ENCODE measurements at regions of chr1 and their contacts with region 1.

Region 1: GRCh38 chr1:246931549-246932365 is at the start of gene AHCTF1:
- DNase-seq: peak; percentile 97
- H3K4me3 ChIP-seq: peak within 1 kb of the TSS; percentile 72 to 95 (median 89)
- H3K27ac ChIP-seq: peak within 1 kb of the TSS; percentile 80
- H3K4me1 ChIP-seq: peaks cover 2% of the 10 kb centered on the region
- H3K27me3 ChIP-seq: no peaks in the 10 kb centered on the region
- CTCF ChIP-seq: peak in 1 of 2 donors; percentile 1
- total RNA-seq, gene AHCTF1: 31.7 to 41.0 TPM

Region 2: GRCh38 chr1:247007511-247008405 is 76.0 kb after region 1 on chr1 and contains the start of gene ZNF695:
- CTCF ChIA-PET with region 1: no interaction called
- dilution Hi-C with region 1: no loop called
- in situ Hi-C with region 1: no loop called
- intact Hi-C with region 1: loop called (anchors 5 kb)
- DNase-seq: peak; percentile 96
- H3K4me3 ChIP-seq: peak within 1 kb of the TSS; percentile 49 to 69 (median 62)
- H3K27ac ChIP-seq: no peak within 1 kb of the TSS
- H3K4me1 ChIP-seq: no peaks in the 10 kb centered on the region
- H3K27me3 ChIP-seq: no peaks in the 10 kb centered on the region
- CTCF ChIP-seq: no peak
- total RNA-seq, gene ZNF695: 1.7 to 4.4 TPM

Region 3: GRCh38 chr1:247078261-247079140 is 146.7 kb after region 1 on chr1 and contains the start of gene ZNF670:
- CTCF ChIA-PET with region 1: no interaction called
- dilution Hi-C with region 1: loop called (anchors 5 kb)
- in situ Hi-C with region 1: no loop called
- intact Hi-C with region 1: loop called (anchors 5 kb)
- DNase-seq: peak; percentile 95
- H3K4me3 ChIP-seq: peak within 1 kb of the TSS; percentile 66 to 85 (median 82)
- H3K27ac ChIP-seq: peak within 1 kb of the TSS; percentile 48
- H3K4me1 ChIP-seq: peaks cover 8% of the 10 kb centered on the region
- H3K27me3 ChIP-seq: no peaks in the 10 kb centered on the region
- CTCF ChIP-seq: no peak
- total RNA-seq, gene ZNF670: 3.3 to 4.1 TPM

Region 4: GRCh38 chr1:247084771-247085170 is 153.0 kb after region 1 on chr1:
- CTCF ChIA-PET with region 1: no interaction called
- dilution Hi-C with region 1: loop called (anchors 5 kb)
- in situ Hi-C with region 1: no loop called
- intact Hi-C with region 1: loop called (anchors 5 kb)
- DNase-seq: no peak
- H3K4me3 ChIP-seq: no peak overlapping the region
- H3K27ac ChIP-seq: no peak overlapping the region
- H3K4me1 ChIP-seq: no peaks in the 10 kb centered on the region
- H3K27me3 ChIP-seq: no peaks in the 10 kb centered on the region
- CTCF ChIP-seq: no peak

Region 5: GRCh38 chr1:247103859-247104591 is 172.3 kb after region 1 on chr1 and contains the start of gene ZNF669:
- CTCF ChIA-PET with region 1: no interaction called
- dilution Hi-C with region 1: no loop called
- in situ Hi-C with region 1: no loop called
- intact Hi-C with region 1: loop called (anchors 2 kb)
- DNase-seq: peak; percentile 92
- H3K4me3 ChIP-seq: peak within 1 kb of the TSS; percentile 64 to 95 (median 79)
- H3K27ac ChIP-seq: peak within 1 kb of the TSS; percentile 80
- H3K4me1 ChIP-seq: no peaks in the 10 kb centered on the region
- H3K27me3 ChIP-seq: no peaks in the 10 kb centered on the region
- CTCF ChIP-seq: no peak
- total RNA-seq, gene ZNF669: 7.4 to 9.0 TPM

Region 6: GRCh38 chr1:247198781-247199180 is 267.0 kb after region 1 on chr1:
- CTCF ChIA-PET with region 1: no interaction called
- dilution Hi-C with region 1: no loop called
- in situ Hi-C with region 1: no loop called
- intact Hi-C with region 1: no loop called
- DNase-seq: no peak
- H3K4me3 ChIP-seq: no peak overlapping the region
- H3K27ac ChIP-seq: no peak overlapping the region
- H3K4me1 ChIP-seq: no peaks in the 10 kb centered on the region
- H3K27me3 ChIP-seq: no peaks in the 10 kb centered on the region
- CTCF ChIP-seq: no peak

Region 7: GRCh38 chr1:247210376-247211117 is 278.8 kb after region 1 on chr1:
- CTCF ChIA-PET with region 1: no interaction called
- dilution Hi-C with region 1: no loop called
- in situ Hi-C with region 1: no loop called
- intact Hi-C with region 1: loop called (anchors 2 kb)
- DNase-seq: peak; percentile 85
- H3K4me3 ChIP-seq: peak overlapping the region; percentile 88 to 97 (median 96)
- H3K27ac ChIP-seq: peak overlapping the region; percentile 68
- H3K4me1 ChIP-seq: peaks cover 8% of the 10 kb centered on the region
- H3K27me3 ChIP-seq: no peaks in the 10 kb centered on the region
- CTCF ChIP-seq: no peak

Region 8: GRCh38 chr1:247331172-247331991 is 399.6 kb after region 1 on chr1 and contains the start of gene ZNF496:
- CTCF ChIA-PET with region 1: no interaction called
- dilution Hi-C with region 1: no loop called
- in situ Hi-C with region 1: no loop called
- intact Hi-C with region 1: loop called (anchors 5 kb)
- DNase-seq: peak; percentile 78
- H3K4me3 ChIP-seq: peak within 1 kb of the TSS; percentile 89 to 93 (median 91)
- H3K27ac ChIP-seq: peak within 1 kb of the TSS; percentile 59
- H3K4me1 ChIP-seq: peaks cover 19% of the 10 kb centered on the region
- H3K27me3 ChIP-seq: no peaks in the 10 kb centered on the region
- CTCF ChIP-seq: no peak
- total RNA-seq, gene ZNF496: 18.3 to 23.8 TPM

Measured in mammary epithelial cell (primary cell).